ENCODE measurements at regions of chr17 and their contacts with region 1.

Region 1: DNA sequence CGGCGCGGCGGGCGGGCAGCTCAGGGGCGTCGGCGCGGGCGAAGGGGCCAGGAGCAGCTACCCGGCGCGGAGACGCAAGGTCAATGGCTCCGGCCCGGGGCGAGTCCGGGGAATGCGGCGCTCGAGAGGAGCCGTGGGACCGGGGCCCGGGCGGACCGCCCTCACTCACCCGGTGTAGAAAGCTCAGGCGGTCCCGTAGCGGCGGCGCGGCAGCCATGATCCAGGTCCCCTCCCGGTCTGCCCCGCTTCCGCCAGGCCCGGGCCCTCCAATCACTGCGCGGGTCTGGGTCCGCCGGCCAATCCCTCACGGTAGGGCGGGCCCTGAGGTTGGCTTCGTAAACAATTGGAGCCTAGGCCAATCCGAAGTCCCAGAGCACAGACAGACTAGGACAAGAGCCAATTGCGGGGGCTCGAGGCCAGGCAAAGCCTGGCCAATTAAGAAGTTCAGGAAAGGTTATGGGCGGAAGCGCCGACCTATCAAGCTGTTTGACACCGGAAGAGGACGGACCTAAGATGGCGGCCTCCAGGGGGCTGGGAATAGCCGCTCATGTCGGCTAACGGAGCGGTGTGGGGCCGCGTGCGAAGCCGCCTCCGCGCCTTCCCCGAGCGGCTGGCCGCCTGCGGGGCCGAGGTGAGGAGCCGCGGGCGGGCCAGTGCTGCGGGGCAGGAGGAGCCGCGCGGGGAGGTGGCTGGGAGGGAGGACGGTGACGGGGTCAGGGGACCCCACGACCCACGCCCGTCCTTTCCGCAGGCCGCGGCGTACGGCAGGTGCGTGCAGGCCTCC is at the starts of genes NDUFAF8 and TEPSIN:
- DNase-seq: peak; percentile 99
- H3K4me3 ChIP-seq: peak within 1 kb of the TSS; percentile 91 to 97
- H3K27ac ChIP-seq: peak within 1 kb of the TSS; percentile 83 to 86
- H3K4me1 ChIP-seq: peaks cover 0 to 53% (median 33%) of the 10 kb centered on the region in 4 donors
- H3K27me3 ChIP-seq: no peaks in the 10 kb centered on the region
- CTCF ChIP-seq: peak; percentile 25 to 31

Region 2: GRCh38 chr17:80991645-80992076 is 247.3 kb before region 1 on chr17 and contains the start of gene CHMP6:
- intact Hi-C with region 1: loop called (anchors 10 kb)
- DNase-seq: peak; percentile 60 to 80
- H3K4me3 ChIP-seq: peak within 1 kb of the TSS; percentile 77 to 98
- H3K27ac ChIP-seq: peak within 1 kb of the TSS; percentile 68 to 69
- H3K4me1 ChIP-seq: peaks cover 0 to 47% (median 34%) of the 10 kb centered on the region in 4 donors
- H3K27me3 ChIP-seq: no peaks in the 10 kb centered on the region
- CTCF ChIP-seq: peak in 1 of 2 experiments; percentile 42

Region 3: DNA sequence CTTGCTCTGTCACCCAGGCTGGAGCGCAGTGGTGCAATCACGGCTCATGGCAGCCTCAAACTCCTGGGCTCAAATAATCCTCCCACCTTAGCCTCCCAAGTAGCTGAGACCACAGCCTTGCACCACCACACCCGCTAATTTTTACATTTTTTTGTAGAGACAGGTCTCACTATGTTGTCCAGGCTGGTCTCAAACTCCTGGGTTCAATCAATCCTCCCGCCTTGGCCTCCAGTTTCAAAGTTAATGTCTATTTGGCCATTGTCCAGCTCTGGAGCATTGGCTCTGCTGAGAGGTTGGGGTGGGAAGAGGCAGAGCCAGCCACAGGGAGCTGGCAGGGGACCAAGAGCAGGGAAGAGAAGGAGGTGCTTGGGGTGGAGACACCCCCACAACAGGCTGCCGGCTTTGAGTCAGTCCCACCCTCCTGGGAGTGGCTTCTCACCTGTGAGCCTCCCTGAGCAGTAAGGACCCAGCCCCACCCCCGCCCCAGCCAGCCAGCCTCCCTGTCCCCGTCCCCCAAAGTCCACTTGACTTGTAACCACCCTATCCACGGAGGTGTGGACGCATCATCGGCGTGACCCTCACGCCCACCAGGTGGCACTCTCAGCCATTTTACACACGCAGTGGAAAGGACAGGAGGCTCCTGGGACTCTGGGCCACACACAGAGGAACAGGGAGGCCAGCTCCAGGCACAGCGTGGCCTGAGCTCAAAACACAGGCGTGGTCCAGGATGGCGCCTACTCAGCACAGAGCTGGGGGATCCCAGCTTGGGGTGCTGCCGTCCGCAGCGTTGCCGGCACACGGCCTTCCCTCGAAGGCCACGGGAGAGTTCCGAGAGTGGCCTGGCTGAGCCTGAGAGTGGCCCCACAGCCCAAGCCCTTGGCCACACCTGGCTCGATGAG is 96.5 kb before region 1 on chr17:
- intact Hi-C with region 1: loop called (anchors 2 kb)
- DNase-seq: peak; percentile 75 to 86
- H3K4me3 ChIP-seq: no peak overlapping the region
- H3K27ac ChIP-seq: no peak overlapping the region
- H3K4me1 ChIP-seq: peaks cover 0 to 10% (median 4%) of the 10 kb centered on the region in 4 donors
- H3K27me3 ChIP-seq: peaks cover 0 to 13% of the 10 kb centered on the region in 2 donors
- CTCF ChIP-seq: peak; percentile 70 to 72

Region 4: GRCh38 chr17:81222906-81223761 is 15.9 kb before region 1 on chr17 and contains the start of gene CEP131:
- intact Hi-C with region 1: loop called (anchors 2 kb)
- DNase-seq: peak; percentile 98 to 99
- H3K4me3 ChIP-seq: peak within 1 kb of the TSS; percentile 64 to 86
- H3K27ac ChIP-seq: peak within 1 kb of the TSS; percentile 55 to 65
- H3K4me1 ChIP-seq: peaks cover 6 to 21% (median 21%) of the 10 kb centered on the region in 4 donors
- H3K27me3 ChIP-seq: no peaks in the 10 kb centered on the region
- CTCF ChIP-seq: no peak

Measured in tibial artery (tissue), 4 donors.